ENCODE measurements at regions of chr20 and their contacts with region 1.

Region 1: DNA sequence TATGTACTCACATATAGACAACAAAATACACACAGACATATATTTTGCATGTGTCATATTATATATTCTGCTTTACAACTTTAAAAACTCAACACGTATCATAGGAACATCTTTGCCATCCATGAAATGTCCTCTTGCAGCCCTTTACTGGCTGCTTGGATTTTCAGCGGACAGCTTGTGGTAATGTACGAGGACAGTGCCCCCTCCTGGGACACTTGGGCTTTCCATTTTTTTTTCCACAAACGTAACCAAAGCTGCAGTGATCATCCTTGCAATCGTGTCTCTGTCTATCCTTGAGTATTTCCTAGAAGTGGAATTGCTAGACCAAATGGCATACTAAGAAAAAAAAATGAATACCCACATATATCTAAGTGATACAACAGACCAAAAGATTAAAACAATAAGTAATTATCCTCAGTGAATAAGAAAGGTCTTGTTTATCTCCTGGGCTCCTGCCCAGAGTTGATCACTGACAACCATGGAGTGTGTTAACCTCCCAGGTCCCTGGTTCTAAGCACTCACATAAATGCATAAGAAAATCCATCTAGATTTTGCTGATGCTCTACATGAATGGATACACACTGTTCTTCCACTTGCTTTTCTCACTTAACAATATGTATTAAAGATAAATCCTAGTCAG is 18.1 kb downstream of the BPI start:
- DNase-seq: peak; percentile 73
- H3K4me3 ChIP-seq: no peak overlapping the region; a peak in 1 of 4 replicates
- H3K27ac ChIP-seq: no peak overlapping the region
- H3K4me1 ChIP-seq: no peaks in the 10 kb centered on the region
- H3K27me3 ChIP-seq: no peaks in the 10 kb centered on the region
- CTCF ChIP-seq: peak; percentile 84
- EP300 ChIP-seq: no peak
- RAD21 ChIP-seq: peak; percentile 87

Region 2: DNA sequence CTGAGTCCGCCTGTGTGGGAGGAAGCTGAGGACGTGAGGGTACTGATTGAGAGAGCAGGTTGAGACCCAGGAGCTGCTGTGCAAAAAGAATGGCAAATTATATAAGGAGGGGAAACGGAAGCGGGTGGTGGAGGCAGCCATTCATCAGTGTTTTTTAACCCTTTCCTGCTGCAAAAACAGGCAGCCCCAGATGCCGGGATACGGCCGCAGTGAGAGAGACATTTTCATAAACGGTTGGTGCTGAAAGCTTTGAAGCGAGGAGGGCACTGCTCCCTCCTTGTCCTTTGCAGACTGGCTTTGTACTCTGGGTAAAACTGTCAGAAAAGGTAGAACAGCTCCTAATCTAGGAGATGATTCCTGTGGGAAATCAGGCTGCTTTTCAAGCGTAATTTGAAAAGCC is 345.2 kb before region 1 on chr20:
- CTCF ChIA-PET with region 1: no interaction called
- POLR2A ChIA-PET with region 1: no interaction called
- DNase-seq: no peak
- H3K4me3 ChIP-seq: no peak overlapping the region
- H3K27ac ChIP-seq: no peak overlapping the region
- H3K4me1 ChIP-seq: no peaks in the 10 kb centered on the region
- H3K27me3 ChIP-seq: no peaks in the 10 kb centered on the region
- CTCF ChIP-seq: no peak
- EP300 ChIP-seq: no peak
- RAD21 ChIP-seq: no peak

Region 3: DNA sequence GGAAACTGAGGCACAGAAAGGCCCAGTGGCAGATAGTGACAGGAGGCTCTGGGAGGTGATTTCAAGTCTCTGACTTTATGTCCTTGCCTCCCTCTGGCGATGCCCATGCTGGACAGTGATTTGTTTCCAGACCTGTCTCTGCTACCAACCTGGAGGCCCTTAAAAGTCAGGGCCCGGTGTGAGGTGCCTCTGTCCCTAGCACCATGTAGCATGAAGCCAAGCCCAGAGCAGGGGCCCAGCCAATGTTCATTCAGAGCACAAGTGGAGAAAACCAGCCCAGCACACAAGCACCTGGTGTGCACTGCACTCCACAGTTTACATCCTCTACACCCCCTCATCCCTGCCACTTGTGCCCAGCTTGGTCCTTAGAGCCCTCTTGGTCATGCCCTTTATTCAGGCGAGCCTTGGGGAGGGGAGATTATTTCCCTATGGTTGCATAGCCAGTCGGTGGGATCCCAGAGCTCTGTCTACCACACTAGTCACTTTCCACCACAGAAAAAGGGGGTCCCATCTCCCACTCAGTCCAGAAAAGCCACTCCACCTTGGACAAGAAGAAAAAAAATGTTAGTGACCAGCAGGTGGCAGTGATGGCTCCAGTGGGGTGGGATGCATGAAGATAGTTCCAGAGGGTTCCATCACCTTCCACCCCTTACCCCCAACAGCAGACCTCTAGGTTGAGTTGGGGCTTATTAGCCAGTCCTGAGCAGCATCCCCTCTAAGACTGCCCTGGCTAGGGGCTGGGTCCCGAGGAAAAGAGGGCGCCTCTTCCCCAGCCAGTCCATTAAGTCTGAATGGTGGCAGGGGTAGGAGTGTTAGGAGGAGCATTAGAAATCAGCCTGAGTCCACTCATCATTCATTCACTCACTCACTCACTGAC is 92.5 kb before region 1 on chr20:
- CTCF ChIA-PET with region 1: interaction called, 20 read pairs
- POLR2A ChIA-PET with region 1: no interaction called
- DNase-seq: peak; percentile 70
- H3K4me3 ChIP-seq: no peak overlapping the region; a peak in 1 of 4 replicates
- H3K27ac ChIP-seq: no peak overlapping the region
- H3K4me1 ChIP-seq: peaks cover 0 to 7% of the 10 kb centered on the region in 2 experiments; a peak in 1 of 4 replicates
- H3K27me3 ChIP-seq: no peaks in the 10 kb centered on the region
- CTCF ChIP-seq: peak; percentile 65
- EP300 ChIP-seq: no peak
- RAD21 ChIP-seq: peak; percentile 62

Region 4: DNA sequence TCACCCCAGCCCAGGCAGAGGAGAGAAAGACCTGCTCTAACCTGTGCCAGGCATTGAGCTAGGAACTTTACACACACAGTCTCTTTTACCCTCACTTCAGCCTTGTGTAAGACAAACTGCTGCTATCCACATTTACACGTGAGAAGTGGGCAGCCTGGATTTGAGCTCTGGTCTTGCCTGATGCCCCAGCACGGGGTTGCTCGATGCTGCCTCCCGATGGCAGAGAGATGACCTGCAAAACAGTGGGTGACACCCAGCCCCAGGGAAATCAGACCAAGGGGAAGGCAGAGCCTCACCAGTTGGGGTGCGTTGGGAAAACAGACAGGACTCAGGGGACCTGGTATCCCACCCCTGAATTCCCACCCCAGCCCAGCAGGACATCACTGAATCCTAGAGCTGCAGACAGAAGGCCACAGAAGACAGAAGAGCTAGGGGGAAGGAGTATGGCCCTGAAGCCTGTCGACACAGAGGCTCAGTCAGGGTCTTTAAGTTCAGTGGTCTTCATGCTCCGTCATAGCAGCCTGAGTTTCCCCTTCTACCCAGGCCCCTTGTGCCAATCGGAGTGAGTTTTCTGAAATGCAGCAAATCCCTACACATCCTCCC is 17.1 kb before region 1 on chr20:
- CTCF ChIA-PET with region 1: interaction called, 11 read pairs
- POLR2A ChIA-PET with region 1: no interaction called
- DNase-seq: peak; percentile 33
- H3K4me3 ChIP-seq: no peak overlapping the region
- H3K27ac ChIP-seq: no peak overlapping the region
- H3K4me1 ChIP-seq: peaks cover 0 to 4% of the 10 kb centered on the region in 2 experiments; a peak in 1 of 4 replicates
- H3K27me3 ChIP-seq: no peaks in the 10 kb centered on the region
- CTCF ChIP-seq: peak; percentile 53
- EP300 ChIP-seq: no peak
- RAD21 ChIP-seq: peak; percentile 37

Measured in SK-N-SH (cell line).